Activated T-helper 2 cell treated with anti-CD3 and anti-CD28 coated beads, Interferon-gamma antibody, Interleukin-2, Interleukin-4, amounts not matched to agents 10 μg/mL and 5 μg/mL and 100 μg/mL, durations not matched to agents 14 hours and 24 hours and 36 hours (primary cell): ENCODE measurements at regions of chr19 and their contacts with region 1.

Region 1: GRCh38 chr19:3798137-3798536 is 12.0 kb upstream of the MATK start:
- DNase-seq: no peak
- H3K4me3 Mint-ChIP-seq: peak overlapping the region; percentile 5
- H3K27ac Mint-ChIP-seq: peak overlapping the region; percentile 28
- H3K4me1 Mint-ChIP-seq: peaks cover 18% of the 10 kb centered on the region
- H3K27me3 Mint-ChIP-seq: peaks cover 11% of the 10 kb centered on the region

Region 2: DNA sequence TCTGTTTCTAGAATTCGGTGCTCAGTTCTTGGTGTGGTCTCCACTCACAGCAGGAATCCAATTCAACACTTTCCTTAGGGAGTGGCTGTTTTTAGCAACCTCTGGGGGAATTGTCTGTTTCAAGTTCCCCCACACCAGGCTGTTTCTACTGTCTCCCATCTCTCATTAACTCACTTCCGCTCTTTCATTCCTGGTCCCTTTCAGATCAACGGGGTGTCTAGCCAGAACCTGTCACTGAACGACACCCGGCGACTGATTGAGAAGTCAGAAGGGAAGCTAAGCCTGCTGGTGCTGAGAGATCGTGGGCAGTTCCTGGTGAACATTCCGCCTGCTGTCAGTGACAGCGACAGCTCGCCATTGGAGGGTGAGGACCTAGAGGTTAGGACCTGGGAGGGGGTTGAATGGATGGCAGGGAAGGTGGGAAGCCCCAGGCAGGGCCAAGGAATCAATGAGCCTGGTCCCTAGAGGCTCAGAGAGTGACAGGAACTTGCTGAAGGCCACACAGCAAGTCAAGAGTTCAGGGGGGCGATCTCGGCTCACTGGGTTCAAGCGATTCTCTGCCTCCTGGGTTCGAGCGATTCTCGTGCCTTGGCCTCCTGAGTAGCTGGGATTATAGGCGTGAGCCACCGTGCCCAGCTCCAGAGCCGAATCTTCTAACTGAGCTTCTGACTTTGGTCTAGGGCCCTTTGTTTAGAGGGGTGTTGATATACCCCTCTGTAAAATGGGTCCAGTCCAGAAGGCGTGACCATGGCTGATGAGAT is 64.4 kb before region 1 on chr19:
- intact Hi-C with region 1: no loop called
- DNase-seq: no peak
- H3K4me3 Mint-ChIP-seq: no peak overlapping the region
- H3K27ac Mint-ChIP-seq: no peak overlapping the region
- H3K4me1 Mint-ChIP-seq: peaks cover 10% of the 10 kb centered on the region
- H3K27me3 Mint-ChIP-seq: no peaks in the 10 kb centered on the region

Region 3: DNA sequence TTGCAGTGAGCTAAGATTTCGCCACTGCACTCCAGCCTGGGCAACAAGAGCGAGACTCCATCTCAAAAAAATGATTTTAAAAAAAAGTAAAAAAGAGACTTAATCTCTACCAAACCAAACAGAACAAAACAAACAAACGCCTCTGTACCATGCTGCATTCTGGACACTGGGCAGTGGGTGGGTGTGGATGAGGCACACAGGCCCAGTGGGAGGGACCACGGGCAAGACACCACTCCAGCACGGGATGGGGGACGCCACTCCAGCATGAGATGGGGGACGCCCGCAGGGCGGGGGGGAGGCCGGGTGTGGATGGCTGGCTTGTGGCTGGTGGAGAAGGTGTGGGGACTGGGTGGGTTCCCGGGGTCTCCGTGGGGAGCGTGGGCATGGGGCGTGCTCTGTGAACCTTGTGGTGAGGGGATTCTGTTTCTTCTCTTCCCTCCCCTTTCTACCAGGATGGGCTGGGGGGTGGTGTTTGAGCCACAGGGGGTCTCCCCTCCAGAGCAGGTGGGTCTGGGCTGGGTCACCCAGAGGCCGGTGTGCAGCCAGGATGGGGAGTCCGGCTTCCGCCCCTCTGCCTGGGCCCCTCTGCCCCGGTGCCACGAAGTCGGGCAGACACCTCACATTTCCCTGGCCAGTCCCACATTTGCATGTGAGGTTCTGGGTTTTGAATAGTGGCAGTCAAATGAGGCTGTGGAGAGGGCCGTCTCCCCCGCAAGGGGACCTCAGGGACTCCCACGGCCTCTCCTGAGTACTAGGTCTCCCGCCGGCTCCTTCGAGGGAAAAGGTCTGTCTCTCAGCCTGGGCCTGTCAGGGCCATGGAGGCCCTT is 12.0 kb after region 1 on chr19:
- intact Hi-C with region 1: loop called (anchors 1 kb)
- DNase-seq: no peak
- H3K4me3 Mint-ChIP-seq: no peak overlapping the region
- H3K27ac Mint-ChIP-seq: no peak overlapping the region
- H3K4me1 Mint-ChIP-seq: peaks cover 29% of the 10 kb centered on the region
- H3K27me3 Mint-ChIP-seq: no peaks in the 10 kb centered on the region